ENCODE measurements at regions of chr12 and their contacts with region 1.

Region 1: GRCh38 chr12:12334367-12335040 is 15.5 kb downstream of the MANSC1 start:
- DNase-seq: peak in 1 of 2 experiments; percentile 69
- H3K4me3 ChIP-seq: no peak overlapping the region
- H3K27ac ChIP-seq: no peak overlapping the region
- H3K4me1 ChIP-seq: peaks cover 4 to 11% (median 9%) of the 10 kb centered on the region in 4 experiments; a peak in 4 of 7 replicates
- H3K27me3 ChIP-seq: no peaks in the 10 kb centered on the region
- CTCF ChIP-seq: peak; percentile 82 to 87 (median 85)
- EP300 ChIP-seq: no peak
- POLR2A ChIP-seq: no peak
- RAD21 ChIP-seq: peak; percentile 77 to 80

Region 2: DNA sequence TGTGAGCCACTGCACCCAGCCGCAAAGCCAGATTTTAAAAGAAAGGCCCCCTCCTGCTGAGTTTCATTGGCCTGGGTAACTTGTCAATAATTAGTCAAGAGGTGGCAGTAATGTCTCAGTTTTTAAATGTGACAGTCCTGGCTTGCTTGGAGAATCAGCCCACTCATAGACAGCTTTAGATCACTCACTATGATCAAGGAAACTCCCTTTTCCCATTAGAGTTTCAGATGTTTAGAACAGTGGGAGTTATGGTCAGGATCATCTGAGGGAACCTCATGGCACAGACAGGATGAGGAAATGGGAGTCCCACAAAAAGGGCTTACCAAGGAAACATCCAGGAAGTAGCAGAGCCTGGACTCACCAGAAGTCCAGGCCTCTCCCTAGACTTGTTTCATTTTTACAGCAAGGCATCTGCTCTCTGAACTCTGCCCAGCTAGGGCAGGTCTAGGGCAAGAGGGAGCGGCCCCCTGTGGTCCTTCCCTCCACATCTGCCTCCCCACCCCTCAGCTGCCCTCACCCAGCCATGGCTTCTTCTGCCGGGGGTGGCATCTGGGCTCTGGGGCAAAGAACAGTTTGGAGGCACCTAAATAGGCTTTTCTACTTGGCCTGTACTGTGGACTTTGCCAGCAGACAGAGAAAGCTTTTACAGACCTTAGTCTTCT is 252.5 kb before region 1 on chr12:
- CTCF ChIA-PET with region 1: interaction called, 42 read pairs
- POLR2A ChIA-PET with region 1: interaction called, 3 read pairs
- DNase-seq: peak in 1 of 2 experiments; percentile 52
- H3K4me3 ChIP-seq: no peak overlapping the region
- H3K27ac ChIP-seq: no peak overlapping the region
- H3K4me1 ChIP-seq: peaks cover 5 to 12% (median 7%) of the 10 kb centered on the region in 4 experiments; a peak in 6 of 7 replicates
- H3K27me3 ChIP-seq: no peaks in the 10 kb centered on the region
- CTCF ChIP-seq: peak in 2 of 3 experiments; percentile 24 to 34; a peak in 2 of 4 replicates
- EP300 ChIP-seq: no peak
- POLR2A ChIP-seq: no peak
- RAD21 ChIP-seq: peak; percentile 70 to 78

Region 3: DNA sequence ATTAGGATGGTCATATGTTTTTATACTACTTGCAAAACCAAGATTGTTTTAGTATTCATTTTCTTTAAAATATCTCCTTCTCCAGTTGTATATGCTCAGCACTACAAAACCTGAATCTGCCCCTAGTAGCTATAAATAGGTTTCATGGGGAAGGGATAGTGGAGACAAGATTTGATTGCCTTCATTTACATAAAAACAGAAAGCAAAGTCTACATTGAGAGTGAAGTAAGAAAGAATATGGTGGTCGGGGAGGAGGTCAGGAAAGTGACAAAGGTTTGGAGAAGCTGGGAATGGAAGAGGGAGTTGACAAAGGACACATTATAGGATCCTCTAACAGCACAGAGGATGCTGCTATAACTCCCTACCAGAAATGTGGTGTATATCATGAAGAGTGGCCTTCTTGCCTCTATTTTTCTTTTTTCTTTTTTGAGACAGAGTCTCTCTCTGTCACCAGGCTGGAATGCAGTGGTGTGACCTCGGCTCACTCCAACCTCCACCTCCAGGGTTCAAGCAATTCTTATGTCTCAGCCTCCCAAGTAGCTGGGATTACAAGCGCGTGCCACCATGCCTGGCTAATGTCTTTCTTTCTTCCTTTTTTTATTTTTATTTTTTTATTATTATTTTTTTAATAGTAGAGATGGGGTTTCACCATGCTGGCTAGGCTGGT is 61.1 kb before region 1 on chr12:
- CTCF ChIA-PET with region 1: no interaction called
- POLR2A ChIA-PET with region 1: no interaction called
- DNase-seq: no peak
- H3K4me3 ChIP-seq: no peak overlapping the region
- H3K27ac ChIP-seq: 0 out of 2 replicates have a peak overlapping the region, but pooled peaks have one; percentile 53
- H3K4me1 ChIP-seq: peaks cover 0 to 3% (median 0%) of the 10 kb centered on the region in 4 experiments; a peak in 4 of 7 replicates
- H3K27me3 ChIP-seq: no peaks in the 10 kb centered on the region
- CTCF ChIP-seq: no peak
- EP300 ChIP-seq: no peak
- POLR2A ChIP-seq: no peak
- RAD21 ChIP-seq: no peak

Region 4: GRCh38 chr12:12290206-12290605 is 44.3 kb before region 1 on chr12:
- CTCF ChIA-PET with region 1: no interaction called
- POLR2A ChIA-PET with region 1: no interaction called
- DNase-seq: no peak
- H3K4me3 ChIP-seq: no peak overlapping the region
- H3K27ac ChIP-seq: no peak overlapping the region
- H3K4me1 ChIP-seq: peaks cover 0 to 9% (median 5%) of the 10 kb centered on the region in 4 experiments; a peak in 5 of 7 replicates
- H3K27me3 ChIP-seq: no peaks in the 10 kb centered on the region; a peak in 1 of 7 replicates
- CTCF ChIP-seq: no peak
- EP300 ChIP-seq: no peak
- POLR2A ChIP-seq: no peak
- RAD21 ChIP-seq: no peak

Region 5: DNA sequence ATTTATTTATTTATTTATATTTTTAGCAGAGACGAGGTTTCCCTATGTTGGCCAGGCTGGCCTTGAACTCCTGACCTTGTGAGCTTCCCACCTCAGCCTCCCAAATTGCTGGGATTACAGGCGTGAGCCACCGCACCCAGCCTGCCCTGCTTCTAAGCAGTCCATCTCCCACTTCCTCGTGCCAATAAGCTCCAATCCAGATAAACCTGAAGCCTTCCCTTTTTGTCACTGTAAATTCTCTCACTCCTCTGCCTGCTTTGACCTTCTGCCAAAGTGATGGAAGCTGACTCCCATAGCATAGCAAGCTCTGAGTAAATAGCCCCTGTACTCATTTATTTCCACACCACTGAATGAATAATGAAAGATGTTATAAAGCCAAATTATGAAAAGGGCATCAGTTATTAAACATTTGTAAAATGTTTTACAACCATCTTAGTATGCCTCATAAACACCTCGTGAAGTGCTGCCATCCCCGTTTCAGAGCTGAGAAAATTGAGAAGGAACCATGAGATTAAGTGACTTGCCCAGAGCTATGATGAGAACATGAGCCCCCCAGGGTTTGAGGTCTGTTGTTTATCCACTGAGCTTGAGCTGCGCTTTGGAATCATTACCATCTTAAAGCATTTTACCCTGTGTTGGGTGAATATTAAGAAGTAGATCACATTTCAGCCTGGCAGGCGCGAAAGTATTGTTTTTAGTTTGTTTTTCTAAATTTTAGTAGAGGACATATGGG is 14.9 kb before region 1 on chr12:
- CTCF ChIA-PET with region 1: interaction called, 20 read pairs
- POLR2A ChIA-PET with region 1: no interaction called
- DNase-seq: no peak
- H3K4me3 ChIP-seq: peak overlapping the region in 2 of 4 experiments; percentile 1 to 19; a peak in 3 of 8 replicates
- H3K27ac ChIP-seq: no peak overlapping the region
- H3K4me1 ChIP-seq: peaks cover 2 to 6% (median 3%) of the 10 kb centered on the region in 4 experiments; a peak in 4 of 7 replicates
- H3K27me3 ChIP-seq: no peaks in the 10 kb centered on the region
- CTCF ChIP-seq: no peak
- EP300 ChIP-seq: no peak
- POLR2A ChIP-seq: no peak
- RAD21 ChIP-seq: no peak

Region 6: GRCh38 chr12:12349711-12350665 is 15.5 kb after region 1 on chr12 and contains the start of gene MANSC1:
- CTCF ChIA-PET with region 1: interaction called, 38 read pairs
- POLR2A ChIA-PET with region 1: interaction called, 3 read pairs
- DNase-seq: peak in 1 of 2 experiments; percentile 82
- H3K4me3 ChIP-seq: peak within 1 kb of the TSS; percentile 48 to 72 (median 60)
- H3K27ac ChIP-seq: no peak within 1 kb of the TSS
- H3K4me1 ChIP-seq: peaks cover 0 to 3% (median 1%) of the 10 kb centered on the region in 4 experiments; a peak in 3 of 7 replicates
- H3K27me3 ChIP-seq: 0 out of 7 replicates have a peak, but pooled peaks cover 0 to 4% (median 0%) of the 10 kb centered on the region in 4 experiments
- CTCF ChIP-seq: peak; percentile 14 to 66 (median 43); a peak in 3 of 4 replicates
- EP300 ChIP-seq: no peak
- POLR2A ChIP-seq: peak in 1 of 2 experiments; percentile 71; a peak in 2 of 3 replicates
- RAD21 ChIP-seq: peak; percentile 25 to 29
- total RNA-seq, gene MANSC1: 6.1 and 8.9 TPM in 2 replicates

Region 7: DNA sequence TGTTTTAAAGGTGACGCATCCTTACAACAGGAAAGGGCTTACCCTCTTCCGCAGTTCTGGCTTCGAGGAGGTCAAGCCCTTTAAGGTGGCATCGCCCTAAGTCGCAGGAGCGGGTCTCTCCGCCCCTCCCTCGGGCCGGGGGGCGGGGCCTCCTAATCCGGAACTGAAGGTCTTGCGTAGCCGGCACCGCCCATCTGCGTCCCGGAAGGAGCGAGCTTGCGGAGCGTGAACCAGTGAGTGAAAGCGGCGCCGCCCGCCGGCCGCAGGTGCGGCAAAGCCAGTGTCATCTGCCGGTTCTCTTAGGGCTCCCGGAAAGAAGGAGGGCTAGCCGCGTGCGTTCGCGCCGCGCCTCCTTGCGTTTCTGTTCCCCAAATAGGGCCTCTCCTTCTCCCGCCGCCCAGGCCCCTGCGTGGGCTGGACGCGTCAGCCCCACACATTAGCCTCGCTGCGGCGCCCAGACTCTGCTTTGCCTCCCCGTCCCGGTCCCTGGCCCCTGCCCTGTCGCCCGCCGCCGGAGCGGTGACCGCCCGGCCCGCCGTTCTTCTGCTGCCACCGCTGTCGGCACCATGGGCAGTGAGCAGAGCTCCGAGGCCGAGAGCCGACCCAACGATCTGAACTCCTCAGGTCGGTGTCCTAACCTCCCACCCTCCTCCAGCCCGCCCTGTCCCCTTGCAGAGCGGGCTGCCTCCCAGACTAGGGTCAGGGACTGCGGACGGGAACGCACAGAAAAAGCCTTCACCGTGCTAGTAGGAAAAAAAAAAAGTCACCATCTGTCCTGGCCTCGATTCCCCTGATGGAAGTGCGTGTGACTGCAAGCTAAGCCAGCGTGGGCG is 22.6 kb after region 1 on chr12 and contains the start of gene BORCS5:
- CTCF ChIA-PET with region 1: interaction called, 24 read pairs
- POLR2A ChIA-PET with region 1: no interaction called
- DNase-seq: peak; percentile 96 to 97
- H3K4me3 ChIP-seq: peak within 1 kb of the TSS; percentile 68 to 86 (median 83)
- H3K27ac ChIP-seq: peak within 1 kb of the TSS; percentile 62
- H3K4me1 ChIP-seq: peaks cover 0 to 6% (median 2%) of the 10 kb centered on the region in 4 experiments; a peak in 3 of 7 replicates
- H3K27me3 ChIP-seq: no peaks in the 10 kb centered on the region
- CTCF ChIP-seq: peak; percentile 17 to 25 (median 20); a peak in 3 of 4 replicates
- EP300 ChIP-seq: no peak; a peak in 1 of 3 replicates
- POLR2A ChIP-seq: peak; percentile 89 to 97
- RAD21 ChIP-seq: peak; percentile 19 to 28; a peak in 1 of 4 replicates
- total RNA-seq, gene BORCS5: 15.4 and 17.4 TPM in 2 replicates